ENCODE measurements at regions of chrX and their contacts with region 1.

Region 1: DNA sequence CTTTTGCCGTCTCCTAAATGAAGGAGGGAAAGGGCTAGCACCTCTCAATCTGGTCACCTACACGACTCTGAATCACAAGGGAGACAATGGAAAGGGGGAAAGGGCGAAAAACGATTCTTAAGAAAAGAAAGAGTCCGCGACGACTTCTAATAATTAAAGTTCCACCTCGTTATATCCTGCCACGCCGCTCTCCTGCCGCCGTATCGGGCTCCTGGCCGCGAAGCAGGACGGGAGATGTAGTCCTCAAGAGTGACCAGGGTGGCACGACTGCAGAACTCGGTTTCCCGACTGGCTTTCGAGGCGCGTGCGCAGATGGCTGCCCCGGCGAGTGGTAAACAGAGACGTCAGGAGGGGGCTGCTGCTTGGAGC is at the start of gene FOXO4:
- DNase-seq: peak; percentile 75 to 94 (median 86)
- ATAC-seq: peak; percentile 85
- H3K4me3 ChIP-seq: peak within 1 kb of the TSS; percentile 83
- H3K4me3 Mint-ChIP-seq: peak within 1 kb of the TSS; percentile 96
- H3K27ac ChIP-seq: peak within 1 kb of the TSS; percentile 41 to 62
- H3K27ac Mint-ChIP-seq: peak within 1 kb of the TSS; percentile 98
- H3K4me1 ChIP-seq: peaks cover 37% of the 10 kb centered on the region
- H3K4me1 Mint-ChIP-seq: peaks cover 49% of the 10 kb centered on the region
- H3K27me3 ChIP-seq: no peaks in the 10 kb centered on the region
- H3K27me3 Mint-ChIP-seq: no peaks in the 10 kb centered on the region
- CTCF ChIP-seq: no peak
- total RNA-seq, gene FOXO4: 20.9 to 23.8 TPM

Region 2: DNA sequence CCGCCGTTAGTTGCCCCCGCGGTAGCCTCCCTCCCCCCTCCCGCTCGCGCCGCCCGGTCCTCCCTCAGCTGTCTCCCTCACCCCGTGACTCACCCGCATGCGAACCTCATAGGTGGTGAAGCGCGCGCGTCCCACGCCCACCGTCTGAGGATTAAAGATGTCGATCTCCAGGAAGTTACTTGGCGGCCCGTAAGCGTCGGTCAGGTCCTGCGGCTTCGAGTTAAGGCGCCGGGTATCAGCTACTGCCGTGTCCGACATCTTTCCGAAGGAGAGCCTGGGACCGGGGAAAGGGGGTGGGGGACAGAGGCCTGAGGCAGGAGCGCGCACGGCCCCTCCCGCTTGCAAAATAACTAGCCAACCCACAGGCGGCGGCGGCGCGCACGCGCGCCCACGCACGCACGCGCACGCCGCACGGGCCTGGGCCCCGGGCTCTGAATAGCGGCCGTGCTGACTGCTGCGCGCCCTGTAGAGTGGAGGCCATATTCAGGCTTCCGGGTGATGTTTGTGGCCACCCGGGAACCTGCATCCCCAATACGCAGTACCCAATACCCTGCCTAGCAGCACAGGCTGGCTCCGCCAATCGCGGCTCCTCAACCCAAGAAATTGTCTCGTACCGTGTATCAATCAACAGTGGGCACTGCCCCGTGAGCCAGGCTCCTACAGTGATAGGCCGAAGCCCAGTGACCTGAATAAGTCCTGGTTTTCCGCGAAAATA is 27.3 kb before region 1 on chrX and contains the start of gene SNX12:
- CTCF ChIA-PET with region 1: no interaction called
- POLR2A ChIA-PET with region 1: interaction called, 4 read pairs
- intact Hi-C with region 1: loop called (anchors 2 kb)
- DNase-seq: peak; percentile 73 to 95 (median 84)
- ATAC-seq: peak; percentile 91
- H3K4me3 ChIP-seq: peak within 1 kb of the TSS; percentile 73
- H3K4me3 Mint-ChIP-seq: peak within 1 kb of the TSS; percentile 98
- H3K27ac ChIP-seq: peak within 1 kb of the TSS; percentile 77 to 89
- H3K27ac Mint-ChIP-seq: peak within 1 kb of the TSS; percentile 100
- H3K4me1 ChIP-seq: peaks cover 10% of the 10 kb centered on the region
- H3K4me1 Mint-ChIP-seq: peaks cover 28% of the 10 kb centered on the region
- H3K27me3 ChIP-seq: no peaks in the 10 kb centered on the region
- H3K27me3 Mint-ChIP-seq: no peaks in the 10 kb centered on the region
- CTCF ChIP-seq: no peak
- total RNA-seq, gene SNX12: 20.5 to 22.4 TPM

Region 3: GRCh38 chrX:71111141-71111843 is 15.8 kb after region 1 on chrX and contains the start of gene IL2RG:
- CTCF ChIA-PET with region 1: interaction called, 22 read pairs
- POLR2A ChIA-PET with region 1: interaction called, 106 read pairs
- intact Hi-C with region 1: loop called in 1 of 2 experiments (anchors 1 kb)
- DNase-seq: peak; percentile 56 to 94 (median 70)
- ATAC-seq: peak; percentile 81
- H3K4me3 ChIP-seq: peak within 1 kb of the TSS; percentile 93
- H3K4me3 Mint-ChIP-seq: peak within 1 kb of the TSS; percentile 98
- H3K27ac ChIP-seq: peak within 1 kb of the TSS; percentile 96 to 99
- H3K27ac Mint-ChIP-seq: peak within 1 kb of the TSS; percentile 99
- H3K4me1 ChIP-seq: peaks cover 56% of the 10 kb centered on the region
- H3K4me1 Mint-ChIP-seq: peaks cover 51% of the 10 kb centered on the region
- H3K27me3 ChIP-seq: no peaks in the 10 kb centered on the region
- H3K27me3 Mint-ChIP-seq: no peaks in the 10 kb centered on the region
- CTCF ChIP-seq: no peak
- total RNA-seq, gene IL2RG: 213 to 225 TPM

Region 4: DNA sequence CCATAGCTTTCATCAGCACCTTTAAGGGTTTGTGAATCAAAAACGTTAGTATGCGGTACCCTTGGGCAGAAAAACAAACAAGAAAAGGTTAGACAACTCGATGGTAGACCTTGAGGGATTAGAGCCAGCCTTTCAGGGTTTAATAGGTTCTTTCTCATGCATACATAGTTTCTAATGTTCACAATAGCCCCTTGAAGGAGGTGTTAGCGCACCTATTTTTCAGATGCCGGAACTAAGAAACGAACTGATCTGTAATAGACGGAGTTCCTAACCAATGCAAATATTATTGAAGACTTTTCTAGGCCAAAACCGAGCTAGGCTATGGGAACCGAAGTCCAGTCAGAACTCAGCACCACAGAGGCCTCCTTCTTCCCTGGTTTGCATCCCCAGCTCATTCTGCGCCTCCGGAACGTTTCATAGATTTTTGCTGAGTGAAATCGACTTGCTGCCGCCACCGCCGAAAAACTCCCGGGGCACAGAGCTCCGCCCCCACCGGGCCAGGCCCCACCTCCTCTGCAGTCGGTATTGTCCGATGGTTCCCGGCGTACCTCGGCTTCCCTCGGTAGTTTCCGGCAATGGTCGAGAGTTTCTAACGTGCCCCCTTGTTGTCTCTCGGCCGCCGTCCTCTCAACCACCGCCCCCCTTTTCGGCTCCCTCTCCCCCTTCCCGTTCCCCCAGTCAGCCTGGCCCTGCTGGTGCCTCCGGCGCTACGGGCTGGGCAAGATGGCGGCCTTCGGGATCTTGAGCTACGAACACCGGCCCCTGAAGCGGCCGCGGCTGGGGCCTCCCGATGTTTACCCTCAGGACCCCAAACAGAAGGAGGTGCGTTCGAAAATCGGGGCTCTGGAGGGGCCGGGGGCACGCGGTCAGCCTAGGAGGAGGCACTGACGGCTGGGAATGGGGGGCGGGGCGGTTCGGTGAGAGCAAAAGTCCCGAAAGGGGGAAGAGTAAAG is 22.8 kb after region 1 on chrX and contains the start of gene MED12:
- CTCF ChIA-PET with region 1: interaction called, 4 read pairs
- POLR2A ChIA-PET with region 1: interaction called, 106 read pairs
- intact Hi-C with region 1: no loop called
- DNase-seq: peak; percentile 63 to 89 (median 76)
- ATAC-seq: peak; percentile 95
- H3K4me3 ChIP-seq: peak within 1 kb of the TSS; percentile 83
- H3K4me3 Mint-ChIP-seq: peak within 1 kb of the TSS; percentile 93
- H3K27ac ChIP-seq: peak within 1 kb of the TSS; percentile 77 to 86
- H3K27ac Mint-ChIP-seq: peak within 1 kb of the TSS; percentile 94
- H3K4me1 ChIP-seq: peaks cover 40% of the 10 kb centered on the region
- H3K4me1 Mint-ChIP-seq: peaks cover 36% of the 10 kb centered on the region
- H3K27me3 ChIP-seq: no peaks in the 10 kb centered on the region
- H3K27me3 Mint-ChIP-seq: no peaks in the 10 kb centered on the region
- CTCF ChIP-seq: no peak
- total RNA-seq, gene MED12: 44.5 to 55.3 TPM

Region 5: GRCh38 chrX:71128915-71129765 is 33.6 kb after region 1 on chrX:
- CTCF ChIA-PET with region 1: interaction called, 40 read pairs
- POLR2A ChIA-PET with region 1: interaction called, 29 read pairs
- intact Hi-C with region 1: loop called (anchors 1 kb)
- DNase-seq: peak; percentile 59 to 87 (median 74)
- ATAC-seq: peak; percentile 96
- H3K4me3 ChIP-seq: no peak overlapping the region
- H3K4me3 Mint-ChIP-seq: no peak overlapping the region
- H3K27ac ChIP-seq: no peak overlapping the region
- H3K27ac Mint-ChIP-seq: peak overlapping the region; percentile 38
- H3K4me1 ChIP-seq: peaks cover 17% of the 10 kb centered on the region
- H3K4me1 Mint-ChIP-seq: peaks cover 18% of the 10 kb centered on the region
- H3K27me3 ChIP-seq: no peaks in the 10 kb centered on the region
- H3K27me3 Mint-ChIP-seq: no peaks in the 10 kb centered on the region
- CTCF ChIP-seq: peak; percentile 60

Region 6: DNA sequence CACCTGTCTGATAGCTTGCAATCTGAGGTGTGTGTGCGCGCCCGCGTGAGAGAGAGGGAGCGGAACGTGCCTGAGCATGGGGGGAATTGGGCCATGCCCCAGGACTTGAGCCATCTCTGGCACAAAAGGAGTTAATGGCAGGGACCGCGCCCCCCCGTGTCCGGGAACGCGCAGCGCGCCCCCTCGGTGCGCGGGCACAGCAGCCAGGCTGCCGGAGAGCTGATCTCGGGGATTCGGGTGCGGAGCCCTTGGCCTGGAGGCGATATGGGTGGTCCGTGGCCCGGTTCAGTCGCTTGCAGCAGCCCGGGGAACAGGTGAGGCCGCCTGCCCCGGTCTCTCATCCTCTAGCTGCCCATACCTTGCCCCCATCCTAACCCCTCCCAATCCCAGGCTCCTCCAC is 49.1 kb after region 1 on chrX and contains the start of gene NLGN3:
- CTCF ChIA-PET with region 1: no interaction called
- POLR2A ChIA-PET with region 1: no interaction called
- intact Hi-C with region 1: no loop called
- DNase-seq: no peak
- ATAC-seq: no peak
- H3K4me3 ChIP-seq: no peak within 1 kb of the TSS
- H3K4me3 Mint-ChIP-seq: peak within 1 kb of the TSS; percentile 45
- H3K27ac ChIP-seq: no peak within 1 kb of the TSS
- H3K27ac Mint-ChIP-seq: no peak within 1 kb of the TSS
- H3K4me1 ChIP-seq: peaks cover 10% of the 10 kb centered on the region
- H3K4me1 Mint-ChIP-seq: peaks cover 13% of the 10 kb centered on the region
- H3K27me3 ChIP-seq: no peaks in the 10 kb centered on the region
- H3K27me3 Mint-ChIP-seq: no peaks in the 10 kb centered on the region
- CTCF ChIP-seq: no peak
- total RNA-seq, gene NLGN3: 3.4 to 4.3 TPM

Region 7: DNA sequence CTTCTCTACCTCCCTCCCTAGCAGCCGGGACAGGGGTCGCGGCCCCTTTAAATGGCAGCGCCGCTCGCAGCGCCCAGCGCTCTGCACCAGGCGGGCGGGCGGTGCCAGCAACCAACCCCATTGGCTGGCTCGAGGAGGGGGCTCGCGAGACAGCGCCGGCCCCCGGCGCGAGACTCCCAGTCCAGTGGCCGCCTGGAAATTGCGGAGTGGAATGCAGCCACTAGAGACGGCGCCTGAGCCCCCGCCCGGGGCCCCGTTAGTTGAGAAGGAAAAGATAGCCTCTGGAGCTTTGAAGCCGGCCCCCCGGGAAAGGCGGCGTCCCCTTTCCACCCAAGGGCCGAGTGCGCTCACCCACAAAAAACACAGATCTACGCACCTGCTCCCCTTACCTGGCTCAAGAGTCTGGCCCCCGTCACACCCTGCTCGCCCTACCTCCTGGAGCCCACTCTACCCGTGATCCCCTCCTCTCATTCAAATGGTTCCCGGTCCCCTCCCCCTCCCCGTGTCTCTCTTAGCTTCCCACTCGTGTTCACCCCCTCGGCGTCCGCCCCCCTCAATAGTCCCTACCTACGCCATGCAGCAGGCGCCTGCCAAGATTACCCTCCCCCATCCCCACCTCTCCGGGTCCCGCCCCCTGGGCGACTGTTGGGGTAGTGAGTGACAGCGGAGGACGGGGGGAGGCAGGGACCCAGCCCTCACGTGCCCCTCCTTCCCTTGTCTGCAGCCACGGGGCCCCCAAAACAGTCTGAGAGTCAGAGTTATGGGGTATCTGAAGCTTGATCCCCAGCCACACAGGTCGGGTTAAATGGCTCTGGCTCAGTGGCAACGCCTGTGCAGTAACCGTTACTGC is 158.8 kb after region 1 on chrX and contains the start of gene ZMYM3:
- CTCF ChIA-PET with region 1: no interaction called
- POLR2A ChIA-PET with region 1: no interaction called
- intact Hi-C with region 1: loop called (anchors 10 kb)
- DNase-seq: peak; percentile 59 to 87 (median 75)
- ATAC-seq: peak; percentile 75
- H3K4me3 ChIP-seq: peak within 1 kb of the TSS; percentile 85
- H3K4me3 Mint-ChIP-seq: peak within 1 kb of the TSS; percentile 95
- H3K27ac ChIP-seq: peak within 1 kb of the TSS; percentile 72 to 84
- H3K27ac Mint-ChIP-seq: peak within 1 kb of the TSS; percentile 93
- H3K4me1 ChIP-seq: peaks cover 27% of the 10 kb centered on the region
- H3K4me1 Mint-ChIP-seq: peaks cover 29% of the 10 kb centered on the region
- H3K27me3 ChIP-seq: no peaks in the 10 kb centered on the region
- H3K27me3 Mint-ChIP-seq: no peaks in the 10 kb centered on the region
- CTCF ChIP-seq: no peak
- total RNA-seq, gene ZMYM3: 16.7 to 17.6 TPM

Measured in CD4-positive, alpha-beta T cell (primary cell).